CD8-positive, alpha-beta T cell (primary cell): ENCODE measurements at regions of chr4 and their contacts with region 1.

Region 1: DNA sequence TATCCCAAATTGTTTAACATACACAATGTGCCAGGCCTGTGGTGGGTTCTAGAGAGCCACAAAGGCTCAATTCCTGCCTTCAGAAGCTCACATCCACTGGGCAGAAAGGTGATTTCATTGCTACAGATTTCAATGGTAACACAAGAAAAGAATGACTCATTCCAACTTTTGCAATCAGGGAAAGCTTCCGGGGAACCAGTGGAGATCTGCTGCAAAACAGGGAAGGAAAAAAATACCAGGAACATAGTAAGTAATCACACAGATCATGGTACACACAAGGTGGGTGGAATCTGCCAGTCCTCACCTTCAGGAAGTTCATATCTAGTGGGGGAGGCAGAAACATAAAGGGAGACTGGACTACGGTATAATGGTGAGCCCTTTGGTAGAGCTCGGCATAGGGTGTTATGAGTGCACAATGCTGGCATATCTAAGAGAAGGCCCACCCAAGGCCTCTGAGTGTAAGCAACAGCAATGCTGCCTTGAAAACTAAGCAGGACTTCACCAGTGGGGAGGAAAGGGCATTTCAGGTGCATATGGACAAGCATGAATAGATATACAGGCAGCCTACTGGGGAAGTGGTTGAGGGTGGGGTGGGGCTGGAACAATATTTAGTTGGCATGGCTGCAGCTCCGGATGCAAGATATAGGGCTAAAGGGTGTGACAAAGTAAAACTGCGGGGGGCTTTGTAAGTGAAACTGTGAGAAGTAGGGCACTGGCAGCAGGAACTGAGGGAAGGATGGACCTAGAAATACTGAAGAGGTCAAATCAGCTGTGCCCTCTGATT is 24.2 kb downstream of the GPRIN3 start:
- DNase-seq: peak in 8 of 9 experiments; percentile 34 to 86 (median 59)
- ATAC-seq: peak; percentile 80
- H3K4me3 ChIP-seq: peak overlapping the region in 1 of 2 experiments; percentile 36
- H3K4me3 Mint-ChIP-seq: peak overlapping the region; percentile 68
- H3K27ac ChIP-seq: peak overlapping the region; percentile 69 to 94
- H3K27ac Mint-ChIP-seq: peak overlapping the region; percentile 93
- H3K4me1 ChIP-seq: peaks cover 45% of the 10 kb centered on the region
- H3K4me1 Mint-ChIP-seq: peaks cover 67% of the 10 kb centered on the region
- H3K27me3 ChIP-seq: no peaks in the 10 kb centered on the region
- H3K27me3 Mint-ChIP-seq: no peaks in the 10 kb centered on the region
- CTCF ChIP-seq: no peak

Region 2: GRCh38 chr4:88975958-88976774 is 307.3 kb before region 1 on chr4:
- CTCF ChIA-PET with region 1: no interaction called
- POLR2A ChIA-PET with region 1: no interaction called
- intact Hi-C with region 1: no loop called
- DNase-seq: no peak
- ATAC-seq: no peak
- H3K4me3 ChIP-seq: no peak overlapping the region
- H3K4me3 Mint-ChIP-seq: no peak overlapping the region
- H3K27ac ChIP-seq: no peak overlapping the region
- H3K27ac Mint-ChIP-seq: no peak overlapping the region
- H3K4me1 ChIP-seq: no peaks in the 10 kb centered on the region
- H3K4me1 Mint-ChIP-seq: no peaks in the 10 kb centered on the region
- H3K27me3 ChIP-seq: no peaks in the 10 kb centered on the region
- H3K27me3 Mint-ChIP-seq: no peaks in the 10 kb centered on the region
- CTCF ChIP-seq: no peak

Region 3: GRCh38 chr4:89268679-89269078 is 14.7 kb before region 1 on chr4:
- CTCF ChIA-PET with region 1: no interaction called
- POLR2A ChIA-PET with region 1: no interaction called
- intact Hi-C with region 1: loop called in 1 of 2 experiments (anchors 2 kb)
- DNase-seq: no peak
- ATAC-seq: no peak
- H3K4me3 ChIP-seq: no peak overlapping the region
- H3K4me3 Mint-ChIP-seq: no peak overlapping the region
- H3K27ac ChIP-seq: no peak overlapping the region
- H3K27ac Mint-ChIP-seq: no peak overlapping the region
- H3K4me1 ChIP-seq: peaks cover 4% of the 10 kb centered on the region
- H3K4me1 Mint-ChIP-seq: peaks cover 75% of the 10 kb centered on the region
- H3K27me3 ChIP-seq: no peaks in the 10 kb centered on the region
- H3K27me3 Mint-ChIP-seq: no peaks in the 10 kb centered on the region
- CTCF ChIP-seq: no peak

Region 4: DNA sequence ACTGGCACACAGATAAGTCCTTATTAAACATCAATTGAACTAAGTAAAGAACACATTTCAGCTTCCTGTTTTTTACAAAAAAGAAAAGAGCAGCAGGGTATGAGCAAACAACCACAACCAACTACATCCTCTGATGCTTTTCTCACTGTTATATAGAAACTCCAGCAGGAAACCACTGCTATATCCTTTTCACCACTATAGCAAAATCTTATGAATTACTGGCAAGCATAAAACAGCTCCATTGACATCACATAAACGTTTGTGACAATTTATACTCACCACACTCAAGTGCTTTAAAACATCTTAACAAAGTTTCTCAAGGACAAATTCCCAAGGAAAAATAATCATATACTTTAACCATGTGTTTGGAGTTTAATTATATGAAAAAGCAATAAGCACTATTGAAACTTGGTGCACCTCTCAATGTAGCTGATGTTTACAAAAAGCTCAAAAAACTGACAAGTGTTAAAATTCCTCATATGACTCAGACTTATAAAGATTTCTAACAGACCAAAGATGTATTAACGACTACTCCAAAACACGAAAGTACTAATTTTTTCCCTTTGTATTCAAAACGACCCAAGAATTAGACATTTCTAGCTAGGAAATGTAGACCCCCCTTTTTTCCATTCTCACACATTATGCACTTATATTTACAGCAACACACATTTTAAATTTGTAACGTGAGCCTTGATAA is 11.3 kb after region 1 on chr4:
- CTCF ChIA-PET with region 1: interaction called, 14 read pairs
- POLR2A ChIA-PET with region 1: interaction called, 20 read pairs
- intact Hi-C with region 1: loop called in 1 of 2 experiments (anchors 1 kb)
- DNase-seq: peak in 2 of 9 experiments; percentile 78 to 88
- ATAC-seq: peak; percentile 74
- H3K4me3 ChIP-seq: peak overlapping the region in 1 of 2 experiments; percentile 21
- H3K4me3 Mint-ChIP-seq: peak overlapping the region; percentile 60
- H3K27ac ChIP-seq: peak overlapping the region; percentile 42 to 82
- H3K27ac Mint-ChIP-seq: peak overlapping the region; percentile 89
- H3K4me1 ChIP-seq: peaks cover 80% of the 10 kb centered on the region
- H3K4me1 Mint-ChIP-seq: peaks cover 89% of the 10 kb centered on the region
- H3K27me3 ChIP-seq: no peaks in the 10 kb centered on the region
- H3K27me3 Mint-ChIP-seq: no peaks in the 10 kb centered on the region
- CTCF ChIP-seq: no peak

Region 5: DNA sequence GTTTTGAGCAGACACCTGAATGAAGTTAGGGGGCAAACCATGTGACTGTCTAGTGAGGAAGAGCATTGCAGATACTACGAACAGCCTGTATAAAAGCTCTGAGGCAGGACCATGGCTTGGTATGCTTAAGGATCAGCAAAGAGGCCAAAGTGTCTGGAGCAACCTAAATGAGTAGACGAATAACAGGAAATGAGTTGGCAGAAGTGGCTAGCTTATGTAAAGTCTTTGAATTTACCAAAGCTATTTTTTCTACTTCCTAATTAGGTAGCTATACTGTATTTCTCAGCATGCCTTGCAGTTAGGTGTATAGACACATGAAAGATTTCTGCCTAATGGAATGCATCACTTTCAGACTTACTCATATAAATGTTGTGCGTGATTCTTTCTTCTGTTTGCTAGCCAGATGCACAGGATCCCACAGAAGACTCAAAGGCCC is 33.5 kb after region 1 on chr4:
- CTCF ChIA-PET with region 1: no interaction called
- POLR2A ChIA-PET with region 1: no interaction called
- intact Hi-C with region 1: loop called in 1 of 2 experiments (anchors 5 kb)
- DNase-seq: peak in 5 of 9 experiments; percentile 33 to 70 (median 54)
- ATAC-seq: peak; percentile 87
- H3K4me3 ChIP-seq: no peak overlapping the region
- H3K4me3 Mint-ChIP-seq: peak overlapping the region; percentile 20
- H3K27ac ChIP-seq: peak overlapping the region; percentile 13 to 67
- H3K27ac Mint-ChIP-seq: peak overlapping the region; percentile 86
- H3K4me1 ChIP-seq: peaks cover 18% of the 10 kb centered on the region
- H3K4me1 Mint-ChIP-seq: peaks cover 20% of the 10 kb centered on the region
- H3K27me3 ChIP-seq: no peaks in the 10 kb centered on the region
- H3K27me3 Mint-ChIP-seq: no peaks in the 10 kb centered on the region
- CTCF ChIP-seq: no peak

Region 6: DNA sequence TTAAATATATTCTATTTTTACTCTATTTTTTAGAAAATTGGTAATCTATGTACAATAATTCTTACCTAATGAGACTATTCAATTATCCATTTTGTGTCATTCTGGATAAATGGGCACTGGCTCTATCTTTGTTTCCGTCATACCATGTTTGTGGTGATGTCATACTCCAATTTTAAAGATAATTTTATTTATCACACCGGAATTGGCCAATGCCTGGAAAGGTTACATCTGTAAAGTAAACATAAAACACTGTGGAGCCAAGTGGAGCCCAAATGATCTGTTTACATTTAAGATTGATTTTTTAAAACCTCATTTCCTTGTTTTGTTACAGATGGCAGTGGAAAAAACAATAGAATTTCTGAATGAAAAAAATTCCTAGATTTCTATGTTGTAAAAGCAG is 144.3 kb after region 1 on chr4:
- CTCF ChIA-PET with region 1: no interaction called
- POLR2A ChIA-PET with region 1: no interaction called
- intact Hi-C with region 1: no loop called
- DNase-seq: no peak
- ATAC-seq: no peak
- H3K4me3 ChIP-seq: no peak overlapping the region
- H3K4me3 Mint-ChIP-seq: no peak overlapping the region
- H3K27ac ChIP-seq: no peak overlapping the region
- H3K27ac Mint-ChIP-seq: no peak overlapping the region
- H3K4me1 ChIP-seq: no peaks in the 10 kb centered on the region
- H3K4me1 Mint-ChIP-seq: no peaks in the 10 kb centered on the region
- H3K27me3 ChIP-seq: no peaks in the 10 kb centered on the region
- H3K27me3 Mint-ChIP-seq: peaks cover 4% of the 10 kb centered on the region
- CTCF ChIP-seq: no peak